PC-3 (cell line): ENCODE measurements at regions of chrX and their contacts with region 1.

Region 1: GRCh38 chrX:37846934-37847732 is at the start of gene DYNLT3:
- DNase-seq: peak; percentile 90
- ATAC-seq: peak; percentile 93
- H3K4me3 ChIP-seq: peak within 1 kb of the TSS; percentile 84
- H3K27ac ChIP-seq: peak within 1 kb of the TSS; percentile 83
- H3K4me1 ChIP-seq: peaks cover 31% of the 10 kb centered on the region
- H3K27me3 ChIP-seq: no peaks in the 10 kb centered on the region
- CTCF ChIP-seq: no peak
- total RNA-seq, gene DYNLT3: 29.6 and 44.0 TPM in 2 replicates

Region 2: GRCh38 chrX:37476571-37477188 is 370.5 kb before region 1 on chrX:
- CTCF ChIA-PET with region 1: no interaction called
- POLR2A ChIA-PET with region 1: interaction called, 11 read pairs
- intact Hi-C with region 1: no loop called
- DNase-seq: no peak
- ATAC-seq: no peak
- H3K4me3 ChIP-seq: no peak overlapping the region
- H3K27ac ChIP-seq: no peak overlapping the region
- H3K4me1 ChIP-seq: no peaks in the 10 kb centered on the region
- H3K27me3 ChIP-seq: no peaks in the 10 kb centered on the region
- CTCF ChIP-seq: no peak

Region 3: DNA sequence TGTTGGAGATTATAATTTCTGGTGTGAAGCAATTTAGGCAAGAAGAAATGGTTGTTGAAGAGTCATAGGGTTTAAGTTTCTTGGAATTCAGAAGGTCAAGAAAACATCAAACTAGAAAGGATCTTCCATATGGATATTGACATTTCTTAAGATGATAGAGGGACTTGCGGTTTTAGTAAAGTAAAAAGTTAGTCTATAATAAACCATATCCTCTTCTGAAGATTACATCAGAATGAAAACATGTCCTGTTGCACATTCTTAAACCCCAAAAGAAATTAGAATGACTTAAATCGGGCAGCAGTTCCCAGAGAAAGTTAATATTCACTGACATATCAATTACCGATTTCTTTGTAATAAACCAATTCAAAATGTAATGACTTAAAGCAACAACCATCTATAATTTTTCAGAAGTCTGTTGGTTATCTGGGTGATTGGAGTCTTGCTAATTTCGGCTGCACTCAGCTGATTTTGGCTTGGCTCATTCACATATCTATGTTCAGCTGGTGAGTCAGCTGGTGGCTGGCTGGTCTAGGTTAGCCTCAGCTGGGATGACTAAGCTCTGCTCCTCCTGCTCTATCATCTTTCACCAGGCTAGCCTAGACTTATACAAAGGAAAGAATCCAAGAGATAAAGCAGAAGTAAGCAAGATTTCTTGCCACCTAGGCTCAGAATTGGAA is 24.6 kb after region 1 on chrX:
- CTCF ChIA-PET with region 1: no interaction called
- POLR2A ChIA-PET with region 1: no interaction called
- intact Hi-C with region 1: loop called (anchors 2 kb)
- DNase-seq: peak; percentile 88
- ATAC-seq: peak; percentile 97
- H3K4me3 ChIP-seq: peak overlapping the region; percentile 13; the same call in 1 of the 2 replicates
- H3K27ac ChIP-seq: peak overlapping the region; percentile 97
- H3K4me1 ChIP-seq: peaks cover 30% of the 10 kb centered on the region
- H3K27me3 ChIP-seq: no peaks in the 10 kb centered on the region
- CTCF ChIP-seq: no peak

Region 4: DNA sequence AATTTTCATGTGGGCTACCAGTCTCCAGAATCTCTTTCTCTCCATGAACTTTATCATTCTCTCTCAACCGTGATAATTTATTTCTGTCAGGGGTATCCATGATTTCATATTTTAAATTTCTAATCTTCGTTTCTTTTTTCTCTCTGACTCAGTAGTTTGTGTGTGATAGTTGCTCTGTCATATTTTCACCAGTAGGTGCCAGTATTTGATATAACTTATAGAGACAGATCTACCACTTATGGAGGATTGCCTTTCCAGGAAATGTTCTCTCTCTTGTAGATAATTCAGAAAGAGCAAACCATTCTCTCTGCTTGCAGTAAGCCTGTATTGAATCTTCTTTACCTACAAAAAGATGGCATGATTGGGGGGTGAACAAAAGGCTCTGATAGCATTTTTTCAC is 79.6 kb after region 1 on chrX:
- CTCF ChIA-PET with region 1: no interaction called
- POLR2A ChIA-PET with region 1: no interaction called
- intact Hi-C with region 1: loop called (anchors 1 kb)
- DNase-seq: peak; percentile 69
- ATAC-seq: peak; percentile 39; the same call in 1 of the 2 replicates
- H3K4me3 ChIP-seq: no peak overlapping the region
- H3K27ac ChIP-seq: no peak overlapping the region
- H3K4me1 ChIP-seq: peaks cover 14% of the 10 kb centered on the region
- H3K27me3 ChIP-seq: no peaks in the 10 kb centered on the region
- CTCF ChIP-seq: peak; percentile 80

Region 5: DNA sequence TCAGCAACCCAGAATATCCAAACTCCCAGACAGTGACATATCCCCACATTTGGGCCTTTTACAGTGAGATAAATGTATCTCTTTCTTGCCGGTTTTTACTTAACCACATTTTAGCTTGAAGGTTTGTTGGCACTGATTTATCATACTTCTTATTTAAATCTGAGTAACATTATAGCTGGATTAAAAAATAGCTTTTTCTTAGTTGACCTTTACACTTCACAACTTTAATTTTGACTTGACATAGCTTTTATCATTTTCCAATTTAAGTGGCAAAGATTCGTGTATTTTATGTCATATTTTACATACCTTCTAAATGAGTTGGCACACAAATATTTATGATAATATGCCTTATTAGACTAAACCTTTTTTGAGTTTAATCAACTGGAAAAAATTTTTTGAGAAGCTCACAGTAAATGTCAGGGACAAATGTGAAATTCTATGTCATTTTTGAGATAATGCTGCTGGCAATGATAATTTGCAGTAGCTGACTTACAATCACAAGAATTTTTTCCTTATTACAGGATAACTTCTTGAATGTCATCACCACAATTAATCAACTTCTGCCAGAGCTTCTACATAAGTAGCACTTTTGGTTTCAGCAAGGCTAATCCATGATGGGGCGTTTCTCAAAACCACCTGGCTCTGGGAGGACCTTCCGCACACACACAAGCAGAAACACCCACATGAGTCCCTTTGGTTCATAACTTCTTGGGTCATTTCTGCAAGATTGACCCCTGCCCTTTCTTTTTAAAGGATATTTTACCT is 239.5 kb after region 1 on chrX:
- CTCF ChIA-PET with region 1: no interaction called
- POLR2A ChIA-PET with region 1: no interaction called
- intact Hi-C with region 1: no loop called
- DNase-seq: no peak
- ATAC-seq: no peak
- H3K4me3 ChIP-seq: no peak overlapping the region
- H3K27ac ChIP-seq: no peak overlapping the region
- H3K4me1 ChIP-seq: peaks cover 15% of the 10 kb centered on the region
- H3K27me3 ChIP-seq: no peaks in the 10 kb centered on the region
- CTCF ChIP-seq: no peak

Region 6: DNA sequence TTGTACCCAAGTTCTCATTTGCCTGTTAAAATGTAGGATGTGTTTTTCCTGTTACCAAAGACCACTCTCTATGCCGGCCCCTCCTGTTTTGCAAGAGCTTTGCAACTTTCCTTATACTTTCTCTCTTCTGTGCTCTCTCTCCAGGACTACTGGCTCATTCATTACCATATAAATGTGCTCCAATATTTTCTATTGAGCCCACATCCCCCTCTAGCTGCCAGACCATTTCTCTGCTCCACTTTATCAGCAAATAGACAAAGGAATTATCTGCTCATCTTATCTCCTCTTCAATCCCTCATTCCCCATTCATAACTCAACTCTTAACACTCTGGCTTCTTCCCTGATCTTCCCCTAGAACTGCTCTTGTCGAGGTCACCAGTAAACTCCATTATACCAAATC is 446.6 kb after region 1 on chrX:
- CTCF ChIA-PET with region 1: no interaction called
- POLR2A ChIA-PET with region 1: no interaction called
- intact Hi-C with region 1: no loop called
- DNase-seq: peak; percentile 17
- ATAC-seq: no peak
- H3K4me3 ChIP-seq: no peak overlapping the region
- H3K27ac ChIP-seq: no peak overlapping the region
- H3K4me1 ChIP-seq: no peaks in the 10 kb centered on the region
- H3K27me3 ChIP-seq: no peaks in the 10 kb centered on the region
- CTCF ChIP-seq: peak; percentile 31; the same call in 1 of the 2 replicates